ENCODE measurements at regions of chr3 and their contacts with region 1.

Region 1: GRCh38 chr3:181555681-181556080 is 156.0 kb upstream of the SOX2 start:
- DNase-seq: no peak
- H3K4me3 ChIP-seq: no peak overlapping the region
- H3K27ac ChIP-seq: no peak overlapping the region
- H3K4me1 ChIP-seq: no peaks in the 10 kb centered on the region
- H3K27me3 ChIP-seq: no peaks in the 10 kb centered on the region
- CTCF ChIP-seq: no peak
- EP300 ChIP-seq: no peak
- POLR2A ChIP-seq: no peak

Region 2: DNA sequence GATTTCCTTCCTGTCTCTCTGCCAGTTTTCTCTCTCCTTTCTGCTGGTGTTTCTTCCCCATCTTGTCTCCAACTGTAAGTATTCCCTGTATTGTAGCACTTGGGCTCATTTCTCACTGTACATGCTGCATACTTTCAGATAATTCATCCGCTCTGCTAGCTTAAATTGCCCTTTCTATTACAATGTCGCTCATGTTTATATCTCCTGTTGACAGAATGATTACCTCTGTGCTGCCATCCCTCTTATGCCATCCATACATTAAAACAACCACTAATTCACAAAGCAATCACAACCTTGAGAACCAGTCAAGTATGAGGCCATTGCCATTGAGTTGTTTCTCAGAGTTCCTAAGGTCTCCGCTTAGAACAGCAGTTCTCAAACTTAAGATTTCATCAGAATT is 48.6 kb after region 1 on chr3:
- in situ Hi-C with region 1: no loop called
- intact Hi-C with region 1: loop called (anchors 1 kb)
- DNase-seq: no peak
- H3K4me3 ChIP-seq: no peak overlapping the region
- H3K27ac ChIP-seq: no peak overlapping the region
- H3K4me1 ChIP-seq: no peaks in the 10 kb centered on the region
- H3K27me3 ChIP-seq: no peaks in the 10 kb centered on the region
- CTCF ChIP-seq: no peak
- EP300 ChIP-seq: no peak
- POLR2A ChIP-seq: no peak

Measured in transverse colon (tissue), 4 donors.